ENCODE measurements at regions of chr2 and their contacts with region 1.

Region 1: GRCh38 chr2:42865884-42866881 is 73.8 kb upstream of the HAAO start:
- DNase-seq: no peak
- H3K4me3 ChIP-seq: no peak overlapping the region
- H3K27ac ChIP-seq: peak overlapping the region; percentile 53 to 68
- H3K4me1 ChIP-seq: no peaks in the 10 kb centered on the region
- H3K27me3 ChIP-seq: no peaks in the 10 kb centered on the region
- CTCF ChIP-seq: no peak
- POLR2A ChIP-seq: no peak

Region 2: GRCh38 chr2:42777883-42778805 is 88.0 kb before region 1 on chr2:
- intact Hi-C with region 1: no loop called
- DNase-seq: no peak
- H3K4me3 ChIP-seq: no peak overlapping the region
- H3K27ac ChIP-seq: no peak overlapping the region
- H3K4me1 ChIP-seq: no peaks in the 10 kb centered on the region
- H3K27me3 ChIP-seq: no peaks in the 10 kb centered on the region
- CTCF ChIP-seq: no peak
- POLR2A ChIP-seq: no peak

Region 3: DNA sequence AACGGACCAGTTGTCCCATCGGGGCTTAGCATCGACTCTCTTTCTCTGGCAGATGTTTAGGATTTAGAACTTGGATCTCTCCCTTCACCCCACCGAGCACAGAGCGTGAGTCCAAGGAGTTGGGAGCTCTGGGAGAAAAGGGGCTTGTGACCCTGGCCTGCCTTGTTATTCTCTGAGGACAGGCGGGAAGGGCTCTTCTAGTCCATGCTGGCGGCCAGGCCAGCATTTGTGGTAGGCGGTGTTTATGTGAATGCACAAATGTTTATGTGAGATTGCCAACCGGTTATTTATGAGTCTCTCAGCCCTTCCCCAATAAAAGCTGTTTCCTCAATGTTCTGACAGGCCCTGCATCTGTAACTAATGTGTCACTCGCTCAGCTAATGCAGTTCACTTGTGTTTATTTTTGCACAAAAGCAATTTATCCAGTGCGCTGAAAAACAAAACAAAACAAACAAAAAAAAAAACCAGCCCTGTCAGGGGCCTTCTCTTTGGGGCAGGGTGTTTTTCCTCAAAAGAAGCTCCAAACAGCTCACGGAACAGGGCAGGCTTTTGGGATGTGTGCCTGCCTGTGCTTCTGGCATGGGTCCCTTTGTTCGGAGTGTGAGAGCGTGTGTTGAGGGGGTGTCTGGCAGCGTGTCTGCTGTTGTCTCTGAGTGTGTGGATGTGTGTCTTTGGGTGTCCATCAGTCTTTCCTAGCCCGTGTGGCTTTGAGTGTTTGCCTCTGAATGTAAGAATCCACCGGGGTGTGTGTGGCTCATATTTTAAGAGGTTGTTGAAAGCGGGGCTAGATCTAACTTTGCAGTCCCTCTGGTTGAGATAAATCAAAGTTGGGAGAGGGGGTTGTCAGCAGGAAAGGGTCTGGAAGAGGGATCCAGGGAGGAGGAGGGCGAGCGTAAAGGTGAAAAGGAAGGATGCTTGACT is 21.0 kb before region 1 on chr2:
- intact Hi-C with region 1: loop called (anchors 1 kb)
- DNase-seq: peak; percentile 74
- H3K4me3 ChIP-seq: no peak overlapping the region
- H3K27ac ChIP-seq: peak overlapping the region; percentile 12 to 34
- H3K4me1 ChIP-seq: no peaks in the 10 kb centered on the region
- H3K27me3 ChIP-seq: no peaks in the 10 kb centered on the region
- CTCF ChIP-seq: no peak
- POLR2A ChIP-seq: no peak

Region 4: GRCh38 chr2:42903821-42904575 is 37.8 kb after region 1 on chr2:
- intact Hi-C with region 1: loop called (anchors 5 kb)
- DNase-seq: no peak
- H3K4me3 ChIP-seq: no peak overlapping the region
- H3K27ac ChIP-seq: peak overlapping the region in 1 of 2 donors; percentile 19
- H3K4me1 ChIP-seq: peaks cover 3% of the 10 kb centered on the region
- H3K27me3 ChIP-seq: peaks cover 2% of the 10 kb centered on the region
- CTCF ChIP-seq: no peak
- POLR2A ChIP-seq: no peak

Region 5: GRCh38 chr2:42928692-42929545 is 62.7 kb after region 1 on chr2:
- intact Hi-C with region 1: loop called (anchors 5 kb)
- DNase-seq: no peak
- H3K4me3 ChIP-seq: no peak overlapping the region
- H3K27ac ChIP-seq: peak overlapping the region; percentile 78 to 81
- H3K4me1 ChIP-seq: peaks cover 27% of the 10 kb centered on the region
- H3K27me3 ChIP-seq: no peaks in the 10 kb centered on the region
- CTCF ChIP-seq: peak in 2 of 4 experiments; percentile 20 to 31
- POLR2A ChIP-seq: no peak